Endothelial cell of umbilical vein (primary cell): ENCODE measurements at regions of chr16 and their contacts with region 1.

Region 1: GRCh38 chr16:48054881-48055601 is 100.8 kb downstream of the ABCC12 start:
- DNase-seq: peak; percentile 45
- H3K4me3 ChIP-seq: no peak overlapping the region
- H3K27ac ChIP-seq: no peak overlapping the region
- H3K4me1 ChIP-seq: no peaks in the 10 kb centered on the region
- H3K27me3 ChIP-seq: peaks cover 0 to 2% of the 10 kb centered on the region in 2 experiments
- CTCF ChIP-seq: peak; percentile 76 to 87
- POLR2A ChIP-seq: no peak

Region 2: GRCh38 chr16:46947900-46948547 is 1107.0 kb before region 1 on chr16:
- CTCF ChIA-PET with region 1: interaction called, 5 read pairs
- POLR2A ChIA-PET with region 1: no interaction called
- dilution Hi-C with region 1: no loop called
- intact Hi-C with region 1: loop called (anchors 10 kb)
- DNase-seq: peak; percentile 46
- H3K4me3 ChIP-seq: no peak overlapping the region
- H3K27ac ChIP-seq: no peak overlapping the region
- H3K4me1 ChIP-seq: no peaks in the 10 kb centered on the region
- H3K27me3 ChIP-seq: no peaks in the 10 kb centered on the region
- CTCF ChIP-seq: peak; percentile 28 to 50
- POLR2A ChIP-seq: no peak

Region 3: GRCh38 chr16:47136101-47136820 is 918.8 kb before region 1 on chr16:
- CTCF ChIA-PET with region 1: interaction called, 199 read pairs
- POLR2A ChIA-PET with region 1: no interaction called
- dilution Hi-C with region 1: no loop called
- intact Hi-C with region 1: no loop called
- DNase-seq: peak; percentile 91
- H3K4me3 ChIP-seq: peak overlapping the region in 1 of 3 experiments; percentile 24
- H3K27ac ChIP-seq: peak overlapping the region; percentile 92
- H3K4me1 ChIP-seq: peaks cover 33% of the 10 kb centered on the region
- H3K27me3 ChIP-seq: no peaks in the 10 kb centered on the region
- CTCF ChIP-seq: no peak
- POLR2A ChIP-seq: no peak

Region 4: GRCh38 chr16:47258874-47259461 is 796.1 kb before region 1 on chr16:
- CTCF ChIA-PET with region 1: interaction called, 13 read pairs
- POLR2A ChIA-PET with region 1: no interaction called
- dilution Hi-C with region 1: no loop called
- intact Hi-C with region 1: loop called (anchors 1 kb)
- DNase-seq: peak; percentile 33
- H3K4me3 ChIP-seq: no peak overlapping the region
- H3K27ac ChIP-seq: no peak overlapping the region
- H3K4me1 ChIP-seq: no peaks in the 10 kb centered on the region
- H3K27me3 ChIP-seq: no peaks in the 10 kb centered on the region
- CTCF ChIP-seq: peak; percentile 61 to 69
- POLR2A ChIP-seq: no peak

Region 5: DNA sequence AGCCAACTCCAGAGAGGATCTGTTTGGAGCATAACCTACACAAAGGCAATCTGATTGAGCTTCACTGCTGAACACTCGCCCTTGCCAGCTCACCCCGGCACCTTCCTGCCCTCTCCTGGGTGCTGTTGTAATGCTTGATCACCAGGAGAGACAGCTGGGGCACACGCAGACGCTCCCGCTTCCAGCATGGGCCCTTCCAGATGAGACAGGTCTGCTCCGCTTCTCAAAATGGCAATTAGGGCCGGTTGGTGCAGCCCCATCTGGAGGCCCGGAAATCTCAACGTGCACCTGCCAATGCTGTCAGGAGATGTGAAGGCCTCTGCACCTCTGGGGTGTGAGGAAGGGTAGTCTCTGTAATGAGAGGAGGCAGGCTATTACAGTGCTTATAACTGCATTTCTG is 105.3 kb before region 1 on chr16:
- CTCF ChIA-PET with region 1: no interaction called
- POLR2A ChIA-PET with region 1: no interaction called
- dilution Hi-C with region 1: no loop called
- intact Hi-C with region 1: no loop called
- DNase-seq: no peak
- H3K4me3 ChIP-seq: no peak overlapping the region
- H3K27ac ChIP-seq: no peak overlapping the region
- H3K4me1 ChIP-seq: no peaks in the 10 kb centered on the region
- H3K27me3 ChIP-seq: no peaks in the 10 kb centered on the region
- CTCF ChIP-seq: no peak
- POLR2A ChIP-seq: no peak